Activated B cell treated with CpG ODN at 0.5 μM for 24 hours (primary cell): ENCODE measurements at regions of chr17 and their contacts with region 1.

Region 1: DNA sequence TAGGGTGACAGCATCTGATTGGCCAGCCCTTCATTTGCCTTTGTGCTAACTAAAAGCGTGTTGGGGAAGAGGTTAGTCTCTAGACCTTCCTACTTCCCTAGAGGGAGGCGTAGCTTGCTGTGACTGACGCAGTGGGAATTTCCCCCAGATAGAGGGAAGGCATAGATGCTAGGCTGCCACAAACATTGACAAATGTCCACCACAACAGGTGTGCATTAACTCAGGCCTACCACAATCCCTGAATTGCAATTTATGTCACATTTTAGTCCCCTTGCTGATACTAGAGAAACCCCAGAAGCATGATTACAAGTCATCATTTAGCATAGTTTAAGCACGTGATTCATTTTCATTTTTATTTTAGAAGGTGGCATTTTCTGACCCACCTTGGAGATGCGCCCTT is 76.3 kb upstream of the WSB1 start:
- DNase-seq: no peak
- ATAC-seq: peak; percentile 88
- H3K4me3 Mint-ChIP-seq: peak overlapping the region; percentile 74
- H3K27ac Mint-ChIP-seq: peak overlapping the region; percentile 99
- H3K4me1 Mint-ChIP-seq: peaks cover 48% of the 10 kb centered on the region
- H3K27me3 Mint-ChIP-seq: no peaks in the 10 kb centered on the region
- CTCF ChIP-seq: no peak

Region 2: DNA sequence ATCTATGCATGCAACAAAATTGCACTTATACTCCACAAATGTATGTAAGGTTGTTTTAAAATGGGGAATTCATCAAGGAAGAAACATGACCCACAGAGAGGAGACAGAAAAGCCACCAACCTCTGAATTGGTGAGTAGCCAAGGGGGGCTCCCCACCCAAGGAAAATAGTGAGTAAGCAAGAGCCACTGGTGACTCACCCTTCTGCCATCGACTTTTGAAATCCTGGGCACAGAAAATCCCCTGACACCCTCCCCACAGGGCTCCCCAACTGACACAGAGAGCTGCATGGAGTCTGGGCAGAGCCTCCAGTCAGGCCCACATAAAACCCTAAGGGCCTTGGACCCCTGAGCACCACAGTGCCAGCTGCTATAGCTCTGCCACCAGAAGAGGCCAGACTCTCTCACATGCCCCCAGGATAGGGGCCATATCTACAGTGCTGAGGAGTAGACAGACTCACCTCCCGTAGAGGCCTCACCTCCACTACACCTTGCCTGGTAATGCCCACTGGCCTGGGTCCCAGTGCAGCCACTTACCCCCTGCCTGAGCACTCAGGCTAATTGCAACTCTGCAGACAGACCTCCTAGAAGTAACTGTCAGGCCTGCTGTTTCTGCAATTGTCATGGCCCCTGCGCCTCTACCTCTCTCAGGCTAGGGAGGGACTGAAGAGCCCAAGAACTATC is 168.4 kb before region 1 on chr17:
- CTCF ChIA-PET with region 1: no interaction called
- POLR2A ChIA-PET with region 1: no interaction called
- intact Hi-C with region 1: no loop called
- DNase-seq: no peak
- ATAC-seq: no peak
- H3K4me3 Mint-ChIP-seq: no peak overlapping the region
- H3K27ac Mint-ChIP-seq: no peak overlapping the region
- H3K4me1 Mint-ChIP-seq: no peaks in the 10 kb centered on the region
- H3K27me3 Mint-ChIP-seq: peaks cover 15% of the 10 kb centered on the region
- CTCF ChIP-seq: no peak

Region 3: GRCh38 chr17:27181935-27182334 is 35.7 kb before region 1 on chr17:
- CTCF ChIA-PET with region 1: no interaction called
- POLR2A ChIA-PET with region 1: interaction called, 3 read pairs
- intact Hi-C with region 1: loop called (anchors 1 kb)
- DNase-seq: no peak
- ATAC-seq: no peak
- H3K4me3 Mint-ChIP-seq: no peak overlapping the region
- H3K27ac Mint-ChIP-seq: peak overlapping the region; percentile 80
- H3K4me1 Mint-ChIP-seq: peaks cover 16% of the 10 kb centered on the region
- H3K27me3 Mint-ChIP-seq: no peaks in the 10 kb centered on the region
- CTCF ChIP-seq: no peak

Region 4: GRCh38 chr17:27199948-27200347 is 17.7 kb before region 1 on chr17:
- CTCF ChIA-PET with region 1: interaction called, 5 read pairs
- POLR2A ChIA-PET with region 1: interaction called, 10 read pairs
- intact Hi-C with region 1: loop called (anchors 1 kb)
- DNase-seq: no peak
- ATAC-seq: no peak
- H3K4me3 Mint-ChIP-seq: no peak overlapping the region
- H3K27ac Mint-ChIP-seq: no peak overlapping the region
- H3K4me1 Mint-ChIP-seq: no peaks in the 10 kb centered on the region
- H3K27me3 Mint-ChIP-seq: no peaks in the 10 kb centered on the region
- CTCF ChIP-seq: no peak

Region 5: DNA sequence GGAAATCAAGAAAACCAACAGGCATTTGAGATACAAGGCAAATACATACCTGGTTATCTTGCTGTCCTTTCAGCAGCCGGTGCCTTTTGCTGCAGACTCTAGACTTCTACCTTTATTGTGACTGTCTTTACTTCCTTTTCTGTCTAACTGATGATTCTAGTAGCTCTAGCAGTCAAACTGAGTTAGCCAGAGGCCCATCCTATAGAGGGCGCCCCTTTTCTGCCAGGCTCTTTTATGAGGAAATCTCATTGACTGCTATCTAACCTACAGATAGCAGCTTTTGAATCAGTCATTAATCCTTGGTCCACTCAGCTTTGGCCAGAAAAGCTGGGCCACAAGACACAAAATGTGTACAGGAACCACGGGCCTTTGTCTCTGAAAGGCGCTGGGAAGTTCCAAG is 11.2 kb before region 1 on chr17:
- CTCF ChIA-PET with region 1: interaction called, 3 read pairs
- POLR2A ChIA-PET with region 1: interaction called, 13 read pairs
- intact Hi-C with region 1: no loop called
- DNase-seq: no peak
- ATAC-seq: peak; percentile 57
- H3K4me3 Mint-ChIP-seq: no peak overlapping the region
- H3K27ac Mint-ChIP-seq: no peak overlapping the region
- H3K4me1 Mint-ChIP-seq: peaks cover 16% of the 10 kb centered on the region
- H3K27me3 Mint-ChIP-seq: no peaks in the 10 kb centered on the region
- CTCF ChIP-seq: no peak

Region 6: GRCh38 chr17:27282054-27282551 is 64.5 kb after region 1 on chr17:
- CTCF ChIA-PET with region 1: no interaction called
- POLR2A ChIA-PET with region 1: interaction called, 26 read pairs
- intact Hi-C with region 1: loop called (anchors 1 kb)
- DNase-seq: no peak
- ATAC-seq: peak; percentile 87
- H3K4me3 Mint-ChIP-seq: peak overlapping the region; percentile 33
- H3K27ac Mint-ChIP-seq: peak overlapping the region; percentile 88
- H3K4me1 Mint-ChIP-seq: peaks cover 58% of the 10 kb centered on the region
- H3K27me3 Mint-ChIP-seq: no peaks in the 10 kb centered on the region
- CTCF ChIP-seq: no peak

Region 7: DNA sequence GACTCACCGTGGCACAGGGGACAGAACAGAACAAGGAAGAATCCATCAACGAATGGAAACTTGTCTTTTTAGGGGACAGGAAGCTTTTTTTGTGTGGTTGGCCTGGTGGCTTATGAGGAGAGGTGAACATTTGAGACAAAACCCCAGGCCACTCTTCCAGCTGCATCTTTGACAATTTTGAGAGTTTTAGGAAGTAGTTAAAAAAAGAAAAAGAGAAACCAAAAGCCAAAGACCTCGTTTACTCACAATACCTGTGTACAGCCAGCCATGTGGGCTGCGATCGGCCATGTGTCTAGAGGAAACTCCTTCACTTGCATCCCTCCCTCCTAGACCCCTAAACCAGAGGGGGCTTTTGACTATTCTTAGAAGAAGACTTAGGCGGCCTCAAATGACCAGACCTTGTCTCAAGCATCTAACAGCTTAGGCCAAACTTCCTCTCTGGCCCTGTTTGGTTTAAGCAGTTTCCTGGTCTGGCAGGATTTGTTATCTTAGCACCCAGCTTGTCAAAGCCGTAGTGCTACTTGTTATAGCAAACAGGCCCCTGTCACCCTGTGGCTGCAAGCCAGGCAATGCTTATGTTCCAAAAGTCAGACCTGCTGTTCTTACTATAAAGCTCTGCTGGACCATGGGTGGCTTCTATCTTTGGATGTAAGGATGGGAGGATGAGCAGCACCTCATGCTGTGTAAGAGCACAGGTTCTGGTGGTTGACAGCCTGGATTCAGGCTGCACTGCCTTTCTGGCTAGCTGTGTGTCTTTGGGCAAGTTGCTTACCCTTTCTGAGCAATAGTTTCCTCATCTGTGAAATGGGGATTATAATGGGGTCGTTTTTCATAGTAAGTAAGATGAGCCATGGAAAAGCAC is 256.3 kb after region 1 on chr17:
- CTCF ChIA-PET with region 1: no interaction called
- POLR2A ChIA-PET with region 1: no interaction called
- intact Hi-C with region 1: loop called (anchors 1 kb)
- DNase-seq: no peak
- ATAC-seq: no peak
- H3K4me3 Mint-ChIP-seq: peak overlapping the region; percentile 71
- H3K27ac Mint-ChIP-seq: peak overlapping the region; percentile 99
- H3K4me1 Mint-ChIP-seq: peaks cover 84% of the 10 kb centered on the region
- H3K27me3 Mint-ChIP-seq: no peaks in the 10 kb centered on the region
- CTCF ChIP-seq: no peak

Region 8: DNA sequence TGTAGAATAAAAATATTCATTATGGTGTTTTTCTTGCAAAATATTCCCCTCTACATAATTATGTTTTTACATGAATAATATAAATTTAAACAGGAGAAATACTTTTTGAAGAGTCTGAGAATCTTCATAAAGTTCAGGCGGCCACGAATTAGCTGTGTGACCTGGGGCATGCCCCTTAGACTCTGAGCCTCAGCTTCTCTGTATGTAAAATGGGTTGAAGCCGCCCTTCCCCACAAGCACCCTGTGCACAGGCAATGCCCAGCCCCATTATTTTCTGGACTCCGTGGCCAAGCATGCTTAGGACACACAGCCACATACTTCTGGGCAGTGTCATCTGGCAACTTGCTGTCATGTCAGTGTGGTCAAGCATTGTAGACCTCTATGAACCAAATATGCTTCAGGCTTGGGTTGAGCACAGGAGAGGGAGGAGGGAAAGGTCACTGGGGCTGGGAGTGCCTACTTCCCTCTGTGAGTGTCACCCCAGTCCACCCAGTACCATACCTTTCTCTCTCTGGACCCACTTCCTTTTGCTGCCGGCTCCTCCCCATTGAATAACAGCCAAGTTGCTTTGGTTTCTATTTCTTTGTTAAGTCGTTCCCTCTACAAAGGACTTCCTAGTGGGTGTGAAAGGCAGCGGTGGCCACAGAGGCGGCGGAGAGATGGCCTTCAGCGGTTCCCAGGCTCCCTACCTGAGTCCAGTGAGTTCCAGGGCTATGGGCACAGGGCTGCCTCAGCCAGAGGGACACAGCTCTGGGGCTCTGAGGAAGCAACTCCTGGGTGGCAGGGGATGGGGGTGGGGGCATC is 413.2 kb after region 1 on chr17 and contains the start of gene LGALS9:
- CTCF ChIA-PET with region 1: no interaction called
- POLR2A ChIA-PET with region 1: interaction called, 3 read pairs
- intact Hi-C with region 1: loop called (anchors 1 kb)
- DNase-seq: no peak
- ATAC-seq: peak; percentile 41
- H3K4me3 Mint-ChIP-seq: peak within 1 kb of the TSS; percentile 96
- H3K27ac Mint-ChIP-seq: peak within 1 kb of the TSS; percentile 94
- H3K4me1 Mint-ChIP-seq: peaks cover 50% of the 10 kb centered on the region
- H3K27me3 Mint-ChIP-seq: no peaks in the 10 kb centered on the region
- CTCF ChIP-seq: no peak
- total RNA-seq, gene LGALS9: 76.8 and 79.9 TPM in 2 replicates